Activated CD8-positive, alpha-beta T cell treated with anti-CD3 and anti-CD28 coated beads, Interleukin-2, amount 10 ng/mL, durations not matched to agents 7 days and 5 days (primary cell): ENCODE measurements at regions of chr13 and their contacts with region 1.

Region 1: DNA sequence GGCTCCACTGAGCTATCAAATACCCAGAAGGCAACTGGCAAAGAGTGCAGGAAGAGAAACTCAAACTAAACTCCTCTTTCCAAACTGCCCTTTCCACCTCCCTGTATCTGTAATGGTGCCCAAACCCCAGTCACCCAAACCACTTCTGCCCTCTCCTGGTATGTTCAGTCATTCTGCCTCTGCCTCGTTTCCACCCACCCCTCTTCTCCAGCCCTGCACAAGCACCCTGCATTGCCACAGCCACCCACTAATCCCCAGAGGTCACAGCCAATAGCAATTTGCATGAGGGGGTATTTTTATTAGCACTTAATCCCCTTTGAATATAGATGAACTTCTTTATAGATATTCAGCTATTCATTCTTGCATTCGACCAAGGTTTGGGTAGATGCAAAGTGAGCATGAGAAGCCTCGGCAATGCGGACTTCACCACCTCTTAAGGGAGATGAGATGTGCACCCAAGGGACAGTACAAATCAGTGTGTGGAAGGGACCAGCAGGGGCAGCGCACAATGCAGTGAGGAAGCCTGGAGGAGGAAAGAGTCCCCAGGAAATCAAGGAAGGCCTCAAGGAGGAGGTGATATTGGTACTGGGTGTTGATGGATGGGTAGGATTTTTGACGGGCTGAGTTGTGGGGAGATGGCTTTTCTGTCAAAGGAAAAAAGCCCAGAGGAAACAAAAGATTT is 12.4 kb downstream of the TMEM272 start:
- DNase-seq: peak; percentile 69
- ATAC-seq: peak; percentile 94
- H3K4me3 Mint-ChIP-seq: no peak overlapping the region
- H3K27ac Mint-ChIP-seq: peak overlapping the region; percentile 7
- H3K4me1 Mint-ChIP-seq: peaks cover 52% of the 10 kb centered on the region
- H3K27me3 Mint-ChIP-seq: no peaks in the 10 kb centered on the region

Region 2: GRCh38 chr13:51803422-51804294 is 29.0 kb before region 1 on chr13 and contains the start of gene DHRS12:
- CTCF ChIA-PET with region 1: interaction called, 14 read pairs
- POLR2A ChIA-PET with region 1: interaction called, 4 read pairs
- DNase-seq: peak; percentile 90
- ATAC-seq: peak; percentile 83
- H3K4me3 Mint-ChIP-seq: peak within 1 kb of the TSS; percentile 88
- H3K27ac Mint-ChIP-seq: peak within 1 kb of the TSS; percentile 99
- H3K4me1 Mint-ChIP-seq: peaks cover 37% of the 10 kb centered on the region
- H3K27me3 Mint-ChIP-seq: no peaks in the 10 kb centered on the region
- total RNA-seq, gene DHRS12: 8.9 to 10.0 TPM